GM23248 (cell line): ENCODE measurements at regions of chr21 and their contacts with region 1.

Region 1: DNA sequence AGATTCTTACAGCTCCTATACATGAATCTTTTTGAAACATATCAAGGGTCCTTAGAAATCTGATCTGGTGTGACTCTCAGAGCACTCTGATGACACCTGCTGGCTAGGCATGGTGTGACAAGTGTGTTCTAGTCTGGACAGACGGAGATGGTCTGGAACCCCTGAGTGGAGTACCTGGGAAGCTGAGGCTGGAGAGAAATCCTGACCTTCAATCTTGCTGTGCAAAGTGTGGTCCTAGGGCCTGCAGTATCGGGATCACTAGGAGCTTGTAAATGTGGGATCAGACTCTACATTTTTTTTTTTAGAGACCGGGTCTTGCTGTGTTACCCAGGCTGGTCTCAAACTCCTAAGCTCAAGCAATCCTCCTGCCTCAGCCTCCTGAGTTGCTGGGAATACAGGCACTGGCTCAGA is 78.6 kb upstream of the SOD1 start:
- DNase-seq: peak; percentile 70
- H3K4me3 ChIP-seq: no peak overlapping the region
- H3K27ac ChIP-seq: no peak overlapping the region
- H3K4me1 ChIP-seq: no peaks in the 10 kb centered on the region
- H3K27me3 ChIP-seq: peaks cover 3% of the 10 kb centered on the region

Region 2: DNA sequence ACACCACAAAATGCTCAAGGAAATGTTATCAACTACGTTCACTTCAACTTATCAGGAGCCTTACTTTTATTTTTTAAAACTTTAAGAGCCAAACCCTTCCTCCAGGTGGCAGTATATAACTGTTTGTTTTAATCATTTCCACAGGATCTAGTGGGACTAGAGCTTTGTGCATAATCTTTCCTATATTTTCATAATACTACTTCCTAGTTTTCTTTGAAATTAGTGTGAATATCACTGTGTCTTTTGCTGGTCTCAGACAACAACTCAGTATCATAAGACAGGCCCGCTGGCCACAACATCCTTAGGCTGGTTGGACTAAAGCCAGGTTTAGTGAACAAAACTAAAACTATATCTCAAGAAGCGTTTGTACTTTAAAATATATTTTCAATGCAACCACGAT is 382.3 kb before region 1 on chr21:
- in situ Hi-C with region 1: loop called (anchors 10 kb)
- DNase-seq: peak; percentile 74
- H3K4me3 ChIP-seq: no peak overlapping the region
- H3K27ac ChIP-seq: no peak overlapping the region
- H3K4me1 ChIP-seq: peaks cover 30% of the 10 kb centered on the region
- H3K27me3 ChIP-seq: no peaks in the 10 kb centered on the region

Region 3: GRCh38 chr21:31537872-31538576 is 42.8 kb before region 1 on chr21:
- in situ Hi-C with region 1: no loop called
- DNase-seq: no peak
- H3K4me3 ChIP-seq: no peak overlapping the region
- H3K27ac ChIP-seq: no peak overlapping the region
- H3K4me1 ChIP-seq: no peaks in the 10 kb centered on the region
- H3K27me3 ChIP-seq: no peaks in the 10 kb centered on the region